ENCODE measurements at regions of chr14 and their contacts with region 1.

Region 1: DNA sequence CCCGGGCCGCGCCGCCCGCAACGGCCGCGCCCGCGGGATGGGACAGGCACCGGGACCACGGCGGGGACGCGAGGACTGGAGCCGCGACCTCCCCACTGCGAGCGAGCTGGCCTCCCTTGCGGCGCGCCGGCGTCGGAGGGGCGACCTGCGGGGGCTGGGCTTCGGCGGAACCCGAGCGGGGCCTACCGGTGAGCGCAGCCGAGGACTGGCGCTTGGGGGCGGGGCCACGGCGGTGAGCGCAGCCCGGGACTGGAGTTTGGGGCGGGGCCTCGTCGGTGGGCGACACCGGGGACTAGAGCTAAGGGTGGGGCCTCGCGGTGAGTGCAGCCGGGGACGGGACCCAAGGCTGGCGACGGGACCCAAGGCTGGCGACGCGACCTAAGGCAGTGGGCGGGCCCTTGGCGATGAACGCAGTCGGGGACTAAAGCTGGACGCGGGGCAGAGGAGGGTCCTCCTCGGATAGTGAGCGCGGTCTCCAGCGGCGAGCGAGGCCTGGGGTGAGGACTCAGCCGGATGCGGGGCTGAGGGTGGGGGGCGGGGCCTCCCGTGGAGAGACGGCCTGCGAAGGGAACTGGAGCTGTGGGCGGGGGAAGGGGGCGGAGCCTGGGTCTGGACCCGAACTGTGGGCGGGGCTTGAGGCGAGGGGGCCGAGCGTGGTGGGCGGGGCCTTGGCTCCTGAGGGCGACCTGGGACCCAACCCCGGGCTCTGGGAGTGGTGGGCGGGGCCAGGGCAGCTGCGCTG is at the start of gene BRF1:
- DNase-seq: peak; percentile 95 to 100 (median 99)
- ATAC-seq: peak; percentile 90
- H3K4me3 ChIP-seq: peak within 1 kb of the TSS; percentile 71 to 97
- H3K4me3 Mint-ChIP-seq: peak within 1 kb of the TSS; percentile 88
- H3K27ac ChIP-seq: peak within 1 kb of the TSS; percentile 86 to 91
- H3K27ac Mint-ChIP-seq: peak within 1 kb of the TSS; percentile 89
- H3K4me1 ChIP-seq: peaks cover 28% of the 10 kb centered on the region
- H3K4me1 Mint-ChIP-seq: peaks cover 37% of the 10 kb centered on the region
- H3K27me3 ChIP-seq: no peaks in the 10 kb centered on the region
- H3K27me3 Mint-ChIP-seq: no peaks in the 10 kb centered on the region
- CTCF ChIP-seq: no peak
- total RNA-seq, gene BRF1: 60.0 to 61.2 TPM

Region 2: DNA sequence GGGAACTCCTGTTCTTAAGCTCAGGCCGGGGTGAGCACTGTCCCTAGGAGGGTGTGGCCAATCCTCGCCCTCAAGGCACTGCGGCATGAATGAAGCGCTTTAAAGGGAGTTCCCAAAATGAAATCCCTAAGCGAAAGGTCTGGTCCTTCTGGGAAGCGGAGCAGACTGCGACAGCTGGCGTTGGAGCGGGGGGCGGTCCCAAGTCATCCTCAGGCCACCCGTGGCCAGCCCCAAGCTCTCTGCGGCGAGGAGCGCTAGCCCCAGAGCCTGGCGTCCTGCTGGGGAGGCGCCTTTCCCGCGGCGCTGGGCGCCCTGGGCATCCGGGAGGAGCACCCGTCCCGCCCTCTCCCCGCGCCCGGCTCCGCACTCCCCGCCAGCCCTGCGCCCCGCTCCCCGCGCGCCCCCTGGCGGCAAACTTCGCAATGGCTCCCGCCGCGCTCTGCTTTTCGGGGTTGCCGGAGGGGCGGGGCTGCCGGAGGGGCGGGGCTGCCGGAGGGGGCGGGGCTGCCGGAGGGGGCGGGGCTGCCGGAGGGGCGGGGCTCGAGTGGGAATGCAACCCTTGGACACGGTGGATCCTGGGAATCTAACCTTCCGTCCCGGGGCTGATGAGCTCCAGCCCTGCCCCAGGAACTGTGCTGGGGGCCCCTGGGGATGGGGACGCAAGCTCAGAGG is 474.6 kb before region 1 on chr14:
- CTCF ChIA-PET with region 1: no interaction called
- POLR2A ChIA-PET with region 1: no interaction called
- intact Hi-C with region 1: loop called in 1 of 2 experiments (anchors 10 kb)
- DNase-seq: peak; percentile 88 to 98 (median 95)
- ATAC-seq: peak; percentile 91
- H3K4me3 ChIP-seq: peak overlapping the region; percentile 66 to 67
- H3K4me3 Mint-ChIP-seq: peak overlapping the region; percentile 80
- H3K27ac ChIP-seq: no peak overlapping the region
- H3K27ac Mint-ChIP-seq: no peak overlapping the region
- H3K4me1 ChIP-seq: peaks cover 20% of the 10 kb centered on the region
- H3K4me1 Mint-ChIP-seq: peaks cover 25% of the 10 kb centered on the region
- H3K27me3 ChIP-seq: peaks cover 0 to 5% of the 10 kb centered on the region in 2 experiments
- H3K27me3 Mint-ChIP-seq: no peaks in the 10 kb centered on the region
- CTCF ChIP-seq: peak; percentile 79

Region 3: DNA sequence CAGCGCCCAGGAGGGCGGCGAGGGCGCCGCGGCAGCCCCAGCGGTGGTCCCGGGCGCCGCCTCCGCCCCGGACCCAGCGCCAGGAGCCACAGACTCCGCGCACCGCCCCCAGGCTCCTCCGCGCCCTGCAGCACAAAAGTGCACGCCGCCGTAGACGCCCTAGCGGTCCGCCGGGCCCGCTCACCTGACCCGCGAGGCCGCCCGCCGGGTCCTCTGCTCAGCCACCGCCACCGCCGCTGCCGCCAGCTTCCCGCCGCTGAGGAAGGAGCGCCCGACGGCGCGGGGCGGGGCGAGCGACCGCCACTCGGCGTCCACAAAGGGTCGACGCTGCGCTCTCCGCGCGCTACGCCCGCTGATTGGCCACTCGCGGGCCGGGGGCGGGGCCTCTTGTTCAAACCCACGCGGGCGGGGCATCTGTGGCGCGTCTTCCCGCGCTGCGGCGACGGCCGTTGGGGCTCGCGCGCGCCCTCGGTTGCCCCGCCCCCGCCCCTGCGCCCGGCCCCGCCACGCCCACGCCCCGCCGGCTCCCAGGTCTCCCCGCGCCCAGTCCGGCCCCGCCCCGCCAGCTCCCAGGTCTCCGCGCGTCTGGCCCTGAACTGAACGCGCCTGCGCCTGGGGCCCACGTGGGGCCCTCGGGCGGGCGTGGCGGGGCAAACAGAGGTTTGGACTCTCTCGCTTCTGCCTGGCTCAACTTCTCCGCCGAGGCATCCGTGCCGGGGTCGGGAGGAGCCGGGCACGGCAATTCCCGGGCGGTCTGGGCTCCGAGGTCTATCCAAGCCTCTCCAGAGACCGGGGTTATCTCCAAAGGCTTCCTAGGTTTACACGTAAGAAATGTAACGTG is 279.9 kb before region 1 on chr14 and contains the start of gene CDCA4:
- CTCF ChIA-PET with region 1: no interaction called
- POLR2A ChIA-PET with region 1: no interaction called
- intact Hi-C with region 1: loop called (anchors 1 kb)
- DNase-seq: peak; percentile 97 to 99 (median 98)
- ATAC-seq: peak; percentile 82
- H3K4me3 ChIP-seq: peak within 1 kb of the TSS; percentile 58 to 87
- H3K4me3 Mint-ChIP-seq: peak within 1 kb of the TSS; percentile 89
- H3K27ac ChIP-seq: peak within 1 kb of the TSS; percentile 78 to 81
- H3K27ac Mint-ChIP-seq: peak within 1 kb of the TSS; percentile 96
- H3K4me1 ChIP-seq: peaks cover 23% of the 10 kb centered on the region
- H3K4me1 Mint-ChIP-seq: peaks cover 53% of the 10 kb centered on the region
- H3K27me3 ChIP-seq: no peaks in the 10 kb centered on the region
- H3K27me3 Mint-ChIP-seq: no peaks in the 10 kb centered on the region
- CTCF ChIP-seq: no peak
- total RNA-seq, gene CDCA4: 20.2 to 22.9 TPM

Region 4: DNA sequence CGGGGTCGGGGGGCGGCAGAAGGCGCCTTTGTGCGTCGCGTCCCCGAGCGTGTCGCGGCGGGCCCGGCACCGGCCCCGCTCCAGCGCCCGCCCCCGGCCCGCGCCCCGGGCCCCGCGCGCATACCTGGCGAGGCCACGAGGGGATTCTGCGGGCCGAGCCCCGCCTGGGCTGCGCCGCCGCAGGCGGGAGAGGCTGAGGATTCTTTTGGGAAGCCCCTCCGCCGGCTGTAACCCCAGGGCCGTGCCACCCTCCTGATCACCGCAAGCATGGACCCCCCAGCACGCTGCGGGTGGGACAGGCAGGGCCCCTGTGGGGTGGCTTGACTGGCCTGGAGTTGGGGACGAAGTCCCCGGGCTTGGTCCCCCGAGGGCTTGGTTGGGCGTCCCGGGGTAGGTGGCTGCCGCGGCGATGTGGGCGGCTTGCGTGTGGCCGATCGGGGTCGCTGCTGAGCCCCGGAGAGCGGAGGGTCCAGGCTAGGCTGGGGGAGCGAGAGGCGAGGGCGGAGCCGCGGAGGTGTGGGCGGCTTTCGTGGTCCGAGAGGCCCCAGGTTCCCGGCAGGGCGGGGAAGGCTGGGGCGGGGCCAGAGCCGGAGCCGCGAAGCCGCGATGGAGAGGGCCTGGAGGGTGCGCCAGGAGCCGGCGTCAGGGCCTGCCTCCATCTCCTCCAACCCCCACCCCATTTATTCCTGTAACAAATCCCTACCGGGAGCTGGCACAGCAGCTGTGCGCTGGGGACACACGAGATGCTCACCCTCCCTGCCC is 207.4 kb before region 1 on chr14:
- CTCF ChIA-PET with region 1: no interaction called
- POLR2A ChIA-PET with region 1: no interaction called
- intact Hi-C with region 1: loop called in 1 of 2 experiments (anchors 1 kb)
- DNase-seq: peak in 8 of 9 experiments; percentile 45 to 85 (median 69)
- ATAC-seq: peak; percentile 56
- H3K4me3 ChIP-seq: peak overlapping the region; percentile 72
- H3K4me3 Mint-ChIP-seq: peak overlapping the region; percentile 76
- H3K27ac ChIP-seq: peak overlapping the region; percentile 69 to 77
- H3K27ac Mint-ChIP-seq: peak overlapping the region; percentile 41
- H3K4me1 ChIP-seq: peaks cover 26% of the 10 kb centered on the region
- H3K4me1 Mint-ChIP-seq: peaks cover 16% of the 10 kb centered on the region
- H3K27me3 ChIP-seq: no peaks in the 10 kb centered on the region
- H3K27me3 Mint-ChIP-seq: no peaks in the 10 kb centered on the region
- CTCF ChIP-seq: no peak

Region 5: GRCh38 chr14:105144666-105145380 is 156.1 kb before region 1 on chr14:
- CTCF ChIA-PET with region 1: no interaction called
- POLR2A ChIA-PET with region 1: no interaction called
- intact Hi-C with region 1: no loop called
- DNase-seq: no peak
- ATAC-seq: no peak
- H3K4me3 ChIP-seq: no peak overlapping the region
- H3K4me3 Mint-ChIP-seq: no peak overlapping the region
- H3K27ac ChIP-seq: no peak overlapping the region
- H3K27ac Mint-ChIP-seq: no peak overlapping the region
- H3K4me1 ChIP-seq: no peaks in the 10 kb centered on the region
- H3K4me1 Mint-ChIP-seq: no peaks in the 10 kb centered on the region
- H3K27me3 ChIP-seq: no peaks in the 10 kb centered on the region
- H3K27me3 Mint-ChIP-seq: no peaks in the 10 kb centered on the region
- CTCF ChIP-seq: no peak

Region 6: GRCh38 chr14:105173901-105174894 is 126.8 kb before region 1 on chr14:
- CTCF ChIA-PET with region 1: no interaction called
- POLR2A ChIA-PET with region 1: no interaction called
- intact Hi-C with region 1: no loop called
- DNase-seq: peak in 8 of 9 experiments; percentile 31 to 73 (median 52)
- ATAC-seq: peak; percentile 62
- H3K4me3 ChIP-seq: no peak overlapping the region
- H3K4me3 Mint-ChIP-seq: peak overlapping the region; percentile 29
- H3K27ac ChIP-seq: no peak overlapping the region
- H3K27ac Mint-ChIP-seq: no peak overlapping the region
- H3K4me1 ChIP-seq: peaks cover 38% of the 10 kb centered on the region
- H3K4me1 Mint-ChIP-seq: peaks cover 22% of the 10 kb centered on the region
- H3K27me3 ChIP-seq: peaks cover 9 to 16% of the 10 kb centered on the region in 2 experiments
- H3K27me3 Mint-ChIP-seq: peaks cover 7% of the 10 kb centered on the region
- CTCF ChIP-seq: no peak

Region 7: GRCh38 chr14:105216490-105217247 is 84.3 kb before region 1 on chr14:
- CTCF ChIA-PET with region 1: no interaction called
- POLR2A ChIA-PET with region 1: no interaction called
- intact Hi-C with region 1: no loop called
- DNase-seq: no peak
- ATAC-seq: no peak
- H3K4me3 ChIP-seq: no peak overlapping the region
- H3K4me3 Mint-ChIP-seq: no peak overlapping the region
- H3K27ac ChIP-seq: no peak overlapping the region
- H3K27ac Mint-ChIP-seq: no peak overlapping the region
- H3K4me1 ChIP-seq: no peaks in the 10 kb centered on the region
- H3K4me1 Mint-ChIP-seq: no peaks in the 10 kb centered on the region
- H3K27me3 ChIP-seq: no peaks in the 10 kb centered on the region
- H3K27me3 Mint-ChIP-seq: no peaks in the 10 kb centered on the region
- CTCF ChIP-seq: no peak

Region 8: DNA sequence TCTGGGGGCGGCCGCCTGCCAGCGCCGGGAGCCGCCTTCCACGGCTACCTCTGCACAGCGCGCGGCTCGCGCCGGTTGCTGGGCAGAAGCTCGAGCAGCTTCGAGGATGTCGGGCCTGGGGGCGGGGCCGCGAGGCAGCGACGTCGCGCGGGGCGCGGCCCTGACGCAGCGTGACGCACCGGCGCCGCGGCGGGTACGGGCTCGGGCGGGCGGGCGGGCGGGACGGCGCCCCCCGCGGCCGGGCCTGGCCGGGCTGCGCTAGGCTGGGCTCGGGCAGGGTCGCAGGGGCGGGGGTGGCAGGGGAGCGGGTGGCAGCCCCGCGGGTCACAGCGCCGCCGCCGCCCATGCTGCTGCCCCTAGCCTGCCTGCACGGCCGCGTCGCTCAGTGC is 52.6 kb before region 1 on chr14 and contains the start of gene BTBD6:
- CTCF ChIA-PET with region 1: no interaction called
- POLR2A ChIA-PET with region 1: interaction called, 22 read pairs
- intact Hi-C with region 1: loop called in 1 of 2 experiments (anchors 1 kb)
- DNase-seq: peak; percentile 80 to 95 (median 88)
- ATAC-seq: peak; percentile 91
- H3K4me3 ChIP-seq: peak within 1 kb of the TSS; percentile 60 to 73
- H3K4me3 Mint-ChIP-seq: peak within 1 kb of the TSS; percentile 78
- H3K27ac ChIP-seq: peak within 1 kb of the TSS; percentile 51 to 73
- H3K27ac Mint-ChIP-seq: peak within 1 kb of the TSS; percentile 75
- H3K4me1 ChIP-seq: peaks cover 21% of the 10 kb centered on the region
- H3K4me1 Mint-ChIP-seq: peaks cover 33% of the 10 kb centered on the region
- H3K27me3 ChIP-seq: no peaks in the 10 kb centered on the region
- H3K27me3 Mint-ChIP-seq: no peaks in the 10 kb centered on the region
- CTCF ChIP-seq: no peak
- total RNA-seq, gene BTBD6: 34.1 to 34.4 TPM

Region 9: DNA sequence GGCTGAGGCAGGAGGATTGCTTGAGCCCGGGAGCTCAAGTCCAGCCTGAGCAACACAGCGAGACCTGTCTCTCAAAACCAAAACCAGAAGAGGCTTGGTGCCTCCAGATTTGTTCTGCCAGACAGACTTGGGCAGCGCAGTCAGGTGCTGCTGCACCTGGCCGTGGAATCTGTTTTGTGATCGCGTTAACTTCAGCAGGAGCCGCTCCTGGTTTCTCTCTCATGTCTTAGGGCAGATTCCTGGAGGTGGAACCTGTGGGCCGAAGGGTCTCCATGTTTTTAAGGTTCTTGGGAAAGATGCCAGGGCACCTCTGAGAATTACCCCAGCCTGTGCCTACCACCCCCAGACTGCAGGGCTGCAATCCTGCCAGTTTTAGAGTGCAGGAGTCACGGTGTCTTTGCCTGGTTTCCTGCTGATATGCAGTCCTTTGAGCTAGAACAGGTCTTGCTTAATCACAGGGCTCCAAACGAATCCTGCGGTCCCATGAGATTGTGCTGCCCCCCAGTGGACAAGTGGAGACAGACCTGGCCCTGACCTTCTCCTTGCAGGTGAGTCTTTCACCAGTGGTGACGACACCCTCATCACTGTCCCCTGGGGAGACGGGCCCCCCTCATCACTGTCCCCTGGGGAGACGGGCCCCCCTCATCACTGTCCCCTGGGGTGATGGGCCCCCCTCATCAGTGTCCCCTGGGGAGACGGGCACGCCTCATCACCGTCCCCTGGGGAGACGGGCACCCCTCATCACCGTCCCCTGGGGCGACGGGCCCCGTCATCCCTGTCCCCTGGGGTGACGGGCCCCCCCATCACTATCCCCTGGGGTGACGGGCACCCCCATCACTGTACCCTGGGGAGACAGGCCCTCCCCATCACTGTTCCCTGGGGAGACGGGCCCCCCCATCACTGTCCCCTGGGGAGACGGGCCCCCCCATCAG is 51.2 kb after region 1 on chr14:
- CTCF ChIA-PET with region 1: no interaction called
- POLR2A ChIA-PET with region 1: no interaction called
- intact Hi-C with region 1: loop called in 1 of 2 experiments (anchors 1 kb)
- DNase-seq: peak; percentile 80 to 93 (median 87)
- ATAC-seq: peak; percentile 99
- H3K4me3 ChIP-seq: no peak overlapping the region
- H3K4me3 Mint-ChIP-seq: no peak overlapping the region
- H3K27ac ChIP-seq: no peak overlapping the region
- H3K27ac Mint-ChIP-seq: no peak overlapping the region
- H3K4me1 ChIP-seq: peaks cover 4% of the 10 kb centered on the region
- H3K4me1 Mint-ChIP-seq: peaks cover 3% of the 10 kb centered on the region
- H3K27me3 ChIP-seq: no peaks in the 10 kb centered on the region
- H3K27me3 Mint-ChIP-seq: no peaks in the 10 kb centered on the region
- CTCF ChIP-seq: peak; percentile 76

Measured in CD8-positive, alpha-beta T cell (primary cell).